Mammary epithelial cell (primary cell): ENCODE measurements at regions of chr1 and their contacts with region 1.

Region 1: DNA sequence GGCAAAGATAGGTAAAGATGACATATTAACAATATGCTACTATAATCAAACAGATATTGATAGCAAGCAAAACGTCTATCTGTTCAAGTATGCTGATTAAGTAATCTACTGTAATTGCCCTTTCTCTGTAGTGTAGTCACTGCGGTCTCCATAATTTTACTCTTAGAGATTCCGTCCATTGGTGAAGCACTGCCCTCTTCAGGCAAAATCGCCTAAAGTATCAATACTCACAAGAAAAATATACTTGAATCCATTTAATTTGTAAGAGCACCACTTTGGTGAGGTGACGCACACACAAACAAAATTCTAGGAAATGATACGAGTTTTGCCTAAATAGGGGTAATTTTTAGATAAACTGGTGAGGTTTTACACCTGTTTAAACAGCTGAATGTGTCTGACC is 434.6 kb upstream of the CHRM3 start:
- DNase-seq: peak; percentile 52
- H3K4me3 ChIP-seq: no peak overlapping the region
- H3K27ac ChIP-seq: no peak overlapping the region
- H3K4me1 ChIP-seq: no peaks in the 10 kb centered on the region
- H3K27me3 ChIP-seq: no peaks in the 10 kb centered on the region
- CTCF ChIP-seq: peak; percentile 36 to 64

Region 2: DNA sequence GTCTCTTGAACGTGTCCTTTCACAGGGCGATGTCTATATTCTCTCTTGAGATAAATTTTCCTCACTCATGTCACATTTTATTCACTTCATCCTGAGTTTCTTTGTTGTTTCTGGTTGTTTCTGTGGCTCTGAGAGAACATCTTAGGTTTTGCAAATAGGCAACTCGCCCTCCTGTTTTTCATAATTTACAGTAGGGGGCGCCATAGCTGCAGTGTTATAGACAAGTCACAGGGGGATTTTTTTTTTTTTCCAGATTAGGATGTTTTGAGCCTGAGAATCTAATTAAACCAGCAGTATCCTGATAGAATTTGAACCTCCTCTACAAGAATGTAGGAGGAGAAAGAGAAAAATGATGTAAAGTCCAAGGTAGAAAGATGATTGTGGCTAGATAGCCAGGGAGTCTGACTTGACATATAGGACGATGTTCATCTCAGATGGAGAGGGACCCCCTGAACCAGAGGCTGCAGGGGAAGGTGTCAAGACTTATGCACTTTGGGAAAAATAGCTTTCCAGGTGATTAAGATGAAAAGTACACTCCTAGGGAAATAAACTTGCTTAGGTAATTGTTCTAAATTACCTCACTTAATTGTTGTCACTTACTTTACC is 1137.4 kb before region 1 on chr1:
- CTCF ChIA-PET with region 1: no interaction called
- dilution Hi-C with region 1: no loop called
- in situ Hi-C with region 1: no loop called
- intact Hi-C with region 1: loop called (anchors 5 kb)
- DNase-seq: no peak
- H3K4me3 ChIP-seq: no peak overlapping the region
- H3K27ac ChIP-seq: no peak overlapping the region
- H3K4me1 ChIP-seq: no peaks in the 10 kb centered on the region
- H3K27me3 ChIP-seq: no peaks in the 10 kb centered on the region
- CTCF ChIP-seq: peak; percentile 55 to 59

Region 3: GRCh38 chr1:238252033-238252802 is 699.6 kb before region 1 on chr1:
- CTCF ChIA-PET with region 1: no interaction called
- dilution Hi-C with region 1: no loop called
- in situ Hi-C with region 1: loop called in 1 of 2 experiments (anchors 25 kb)
- intact Hi-C with region 1: loop called (anchors 1 kb)
- DNase-seq: peak; percentile 58
- H3K4me3 ChIP-seq: no peak overlapping the region
- H3K27ac ChIP-seq: no peak overlapping the region
- H3K4me1 ChIP-seq: no peaks in the 10 kb centered on the region
- H3K27me3 ChIP-seq: no peaks in the 10 kb centered on the region
- CTCF ChIP-seq: peak; percentile 49 to 66

Region 4: DNA sequence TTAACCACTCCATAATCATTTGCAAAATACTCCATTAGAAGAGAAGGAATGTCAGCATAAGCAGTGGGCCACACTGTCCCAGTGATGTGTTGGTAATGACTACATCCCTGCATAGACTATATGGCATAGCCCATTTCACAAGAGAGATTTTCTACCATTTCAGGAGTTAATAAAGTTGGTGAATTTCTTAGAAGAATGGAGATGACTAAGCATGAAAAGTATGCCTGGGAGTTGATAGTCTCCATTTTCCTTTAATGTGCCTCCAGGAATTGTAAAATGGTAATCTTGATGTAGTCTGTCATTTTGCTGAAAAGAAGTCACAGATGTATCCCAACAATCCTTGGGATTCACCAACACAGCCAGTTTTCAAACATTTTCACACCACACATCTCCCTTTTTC is 174.3 kb before region 1 on chr1:
- CTCF ChIA-PET with region 1: no interaction called
- dilution Hi-C with region 1: no loop called
- in situ Hi-C with region 1: no loop called
- intact Hi-C with region 1: loop called (anchors 10 kb)
- DNase-seq: no peak
- H3K4me3 ChIP-seq: no peak overlapping the region
- H3K27ac ChIP-seq: no peak overlapping the region
- H3K4me1 ChIP-seq: peaks cover 2% of the 10 kb centered on the region
- H3K27me3 ChIP-seq: no peaks in the 10 kb centered on the region
- CTCF ChIP-seq: no peak

Region 5: GRCh38 chr1:239282411-239282810 is 330.6 kb after region 1 on chr1:
- CTCF ChIA-PET with region 1: no interaction called
- dilution Hi-C with region 1: no loop called
- in situ Hi-C with region 1: no loop called
- intact Hi-C with region 1: no loop called
- DNase-seq: no peak
- H3K4me3 ChIP-seq: no peak overlapping the region
- H3K27ac ChIP-seq: no peak overlapping the region
- H3K4me1 ChIP-seq: no peaks in the 10 kb centered on the region
- H3K27me3 ChIP-seq: no peaks in the 10 kb centered on the region
- CTCF ChIP-seq: no peak

Region 6: DNA sequence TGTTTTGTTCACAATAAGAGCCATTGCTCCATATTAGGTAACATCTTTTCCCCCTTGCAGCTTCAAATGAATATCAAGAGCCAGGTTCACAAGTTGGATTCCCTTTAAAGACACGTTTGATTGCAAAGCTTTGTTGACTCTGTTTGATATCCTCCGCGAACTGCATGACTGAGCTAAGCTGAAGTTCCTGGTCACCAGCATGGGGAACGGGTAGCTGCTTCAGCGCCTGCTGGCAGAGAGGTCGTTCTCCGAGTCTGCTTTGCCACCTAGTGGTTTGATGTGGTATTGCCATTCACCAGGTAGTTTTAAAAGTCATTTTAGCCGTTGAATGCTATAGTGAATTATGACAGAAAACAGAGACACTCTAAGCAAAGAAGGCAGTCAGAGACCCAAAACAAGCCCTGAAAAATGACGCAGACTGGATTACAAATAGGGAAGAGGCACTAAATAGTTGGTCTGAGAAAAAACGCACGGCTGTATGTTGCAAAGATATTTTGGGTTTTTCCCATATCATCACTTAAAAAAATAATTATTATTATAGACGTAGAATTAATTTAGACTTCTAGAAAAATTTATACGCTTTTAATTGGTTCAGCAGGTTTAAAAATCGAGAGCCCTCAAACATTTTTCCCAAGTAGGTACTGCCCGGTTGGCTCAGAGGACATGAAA is 946.4 kb after region 1 on chr1:
- CTCF ChIA-PET with region 1: no interaction called
- dilution Hi-C with region 1: no loop called
- in situ Hi-C with region 1: no loop called
- intact Hi-C with region 1: loop called (anchors 5 kb)
- DNase-seq: peak; percentile 40
- H3K4me3 ChIP-seq: no peak overlapping the region
- H3K27ac ChIP-seq: no peak overlapping the region
- H3K4me1 ChIP-seq: no peaks in the 10 kb centered on the region
- H3K27me3 ChIP-seq: no peaks in the 10 kb centered on the region
- CTCF ChIP-seq: peak; percentile 90 to 95